ENCODE measurements at regions of chr6 and their contacts with region 1.

Region 1: GRCh38 chr6:22041797-22042493 is 254.9 kb downstream of the PRL start:
- DNase-seq: no peak
- ATAC-seq: no peak

Region 2: GRCh38 chr6:21981235-21981833 is 60.6 kb before region 1 on chr6:
- intact Hi-C with region 1: loop called (anchors 2 kb)
- DNase-seq: no peak
- ATAC-seq: no peak